Keratinocyte (primary cell): ENCODE measurements at regions of chr7 and their contacts with region 1.

Region 1: DNA sequence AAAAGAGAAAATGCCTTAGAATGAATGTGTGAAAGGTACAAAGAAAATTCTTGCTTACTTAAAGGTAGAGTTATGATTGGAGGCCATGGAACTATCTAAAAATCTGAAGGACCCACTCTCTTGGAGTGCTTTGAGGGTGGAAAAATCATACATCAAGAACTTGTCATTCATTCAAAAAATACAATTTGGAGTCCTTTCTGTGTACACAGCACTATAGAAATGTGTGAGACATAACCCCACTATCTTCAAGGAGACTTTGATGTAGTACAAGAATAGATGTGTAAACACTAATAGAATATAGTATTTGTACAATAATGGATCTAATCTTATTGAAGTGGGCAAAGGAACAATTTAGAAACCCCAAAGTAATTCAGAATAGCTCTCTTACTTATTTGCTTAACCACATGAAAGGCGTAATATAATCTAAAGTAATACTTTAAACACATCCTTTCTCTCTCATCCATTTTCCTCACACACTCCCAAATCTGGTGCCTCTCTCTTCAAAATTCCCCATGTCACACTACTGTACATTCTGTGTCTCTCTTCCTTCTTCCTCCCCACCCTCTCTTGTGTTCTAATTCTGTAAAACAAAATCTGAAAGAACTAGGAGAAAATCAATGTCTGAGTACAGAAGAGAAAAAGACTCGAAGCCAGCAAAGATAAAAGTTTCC is 166.7 kb downstream of the DNAJB9 start:
- DNase-seq: no peak
- H3K4me3 ChIP-seq: no peak overlapping the region
- H3K27ac ChIP-seq: no peak overlapping the region
- H3K4me1 ChIP-seq: no peaks in the 10 kb centered on the region
- H3K27me3 ChIP-seq: no peaks in the 10 kb centered on the region
- CTCF ChIP-seq: no peak

Region 2: DNA sequence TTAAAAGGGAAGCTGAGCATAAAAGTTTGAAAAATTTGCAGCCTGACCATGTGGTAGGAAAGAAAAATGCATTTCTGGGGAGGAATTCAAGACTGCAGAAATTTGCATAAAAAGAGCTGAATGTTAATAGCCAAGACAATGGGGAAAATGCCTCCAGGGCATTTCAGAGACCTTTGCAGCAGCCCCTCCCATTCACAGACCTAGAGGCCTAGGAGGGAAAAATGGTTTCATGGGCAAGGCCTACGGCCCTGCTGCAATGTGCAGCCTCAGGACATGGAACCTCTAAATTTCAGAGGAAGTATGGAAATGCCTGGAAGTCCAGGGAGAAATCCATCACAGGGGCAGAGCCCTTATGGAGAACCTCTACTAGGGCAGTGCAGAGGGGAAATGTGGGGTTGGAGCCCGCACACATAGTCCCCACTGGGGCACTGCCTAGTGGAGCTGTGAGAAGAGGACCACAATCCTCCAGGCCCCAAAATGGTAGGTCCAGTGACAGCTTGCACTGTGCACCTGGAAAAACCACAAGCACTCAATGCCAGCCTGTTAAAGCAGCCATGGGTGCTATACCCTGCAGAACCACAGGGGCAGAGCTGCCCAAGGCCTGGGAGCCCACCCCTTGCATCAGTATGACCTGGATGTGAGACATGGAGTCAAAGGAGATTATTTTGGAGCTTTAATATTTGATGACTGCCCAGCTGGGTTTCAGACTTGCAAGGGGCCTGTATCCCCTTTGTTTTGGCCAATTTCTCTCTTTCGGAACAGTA is 77.1 kb after region 1 on chr7:
- dilution Hi-C with region 1: no loop called
- DNase-seq: no peak
- H3K4me3 ChIP-seq: no peak overlapping the region
- H3K27ac ChIP-seq: no peak overlapping the region
- H3K4me1 ChIP-seq: no peaks in the 10 kb centered on the region
- H3K27me3 ChIP-seq: no peaks in the 10 kb centered on the region
- CTCF ChIP-seq: no peak

Region 3: GRCh38 chr7:108824840-108825580 is 88.7 kb after region 1 on chr7:
- dilution Hi-C with region 1: loop called (anchors 5 kb)
- DNase-seq: no peak
- H3K4me3 ChIP-seq: no peak overlapping the region
- H3K27ac ChIP-seq: no peak overlapping the region
- H3K4me1 ChIP-seq: no peaks in the 10 kb centered on the region
- H3K27me3 ChIP-seq: no peaks in the 10 kb centered on the region
- CTCF ChIP-seq: no peak

Region 4: GRCh38 chr7:108972004-108972403 is 235.6 kb after region 1 on chr7:
- dilution Hi-C with region 1: no loop called
- DNase-seq: no peak
- H3K4me3 ChIP-seq: no peak overlapping the region
- H3K27ac ChIP-seq: no peak overlapping the region
- H3K4me1 ChIP-seq: no peaks in the 10 kb centered on the region
- H3K27me3 ChIP-seq: no peaks in the 10 kb centered on the region
- CTCF ChIP-seq: no peak